HepG2 (cell line): ENCODE measurements at regions of chr1 and their contacts with region 1.

Region 1: DNA sequence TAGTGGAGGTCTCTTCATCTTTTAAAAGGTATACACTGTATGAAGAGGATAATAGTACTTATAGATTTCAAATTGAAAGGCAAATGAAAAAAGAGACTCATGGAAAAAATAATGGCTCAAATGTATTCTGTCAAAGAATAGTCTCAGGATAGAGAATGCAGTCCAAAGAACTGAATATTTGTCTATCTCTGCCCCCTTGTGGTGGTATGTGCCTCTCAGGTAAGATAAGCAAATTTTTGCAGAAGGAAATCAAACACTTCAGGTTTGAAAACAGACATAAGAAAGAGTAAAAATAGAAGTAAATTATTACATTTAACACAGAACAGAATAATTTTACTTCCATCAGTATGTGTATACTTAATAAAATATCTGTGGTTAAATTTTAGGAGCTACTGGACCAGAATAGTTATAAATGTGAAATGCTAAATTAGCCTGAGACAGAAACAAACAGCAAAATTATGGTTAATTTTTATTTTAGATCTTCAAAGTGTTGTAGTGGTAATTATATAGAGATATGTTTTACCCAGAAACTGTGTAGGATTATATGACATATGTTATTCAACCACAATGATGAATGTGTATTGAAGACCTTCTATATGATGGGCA is 164.4 kb upstream of the PALMD start:
- DNase-seq: peak; percentile 60
- ATAC-seq: peak; percentile 77
- H3K4me3 ChIP-seq: no peak overlapping the region
- H3K27ac ChIP-seq: no peak overlapping the region
- H3K4me1 ChIP-seq: no peaks in the 10 kb centered on the region
- H3K27me3 ChIP-seq: no peaks in the 10 kb centered on the region
- CTCF ChIP-seq: peak; percentile 70
- EP300 ChIP-seq: no peak
- POLR2A ChIP-seq: no peak
- RAD21 ChIP-seq: peak; percentile 53; the same call in 1 of the 2 replicates

Region 2: GRCh38 chr1:98794196-98794886 is 687.2 kb before region 1 on chr1:
- CTCF ChIA-PET with region 1: no interaction called
- POLR2A ChIA-PET with region 1: no interaction called
- in situ Hi-C with region 1: no loop called
- intact Hi-C with region 1: loop called (anchors 1 kb)
- DNase-seq: peak; percentile 42
- ATAC-seq: peak; percentile 94
- H3K4me3 ChIP-seq: no peak overlapping the region
- H3K27ac ChIP-seq: no peak overlapping the region
- H3K4me1 ChIP-seq: no peaks in the 10 kb centered on the region
- H3K27me3 ChIP-seq: no peaks in the 10 kb centered on the region
- CTCF ChIP-seq: peak; percentile 74
- EP300 ChIP-seq: no peak
- POLR2A ChIP-seq: no peak
- RAD21 ChIP-seq: 0 out of 2 replicates have a peak, but pooled peaks have one; percentile 18

Region 3: DNA sequence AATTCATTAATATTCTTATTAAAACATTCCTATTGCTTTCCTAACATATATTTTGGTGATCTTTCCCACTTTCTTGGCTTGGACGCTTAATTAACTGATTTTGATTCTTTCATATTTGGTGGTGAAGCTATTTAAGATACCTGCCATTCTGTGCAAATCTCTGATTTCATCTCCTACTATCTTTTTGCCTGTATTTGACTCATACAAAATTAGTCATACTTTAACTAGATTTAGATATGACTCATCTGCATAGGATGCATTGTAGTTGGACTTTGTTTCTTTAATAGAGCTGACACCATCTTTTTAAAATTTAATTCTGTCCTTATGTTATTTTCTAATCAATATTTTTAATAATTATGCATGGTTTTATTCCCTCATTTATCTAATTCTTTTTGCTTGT is 311.0 kb before region 1 on chr1:
- CTCF ChIA-PET with region 1: no interaction called
- POLR2A ChIA-PET with region 1: no interaction called
- in situ Hi-C with region 1: loop called (anchors 10 kb)
- intact Hi-C with region 1: no loop called
- DNase-seq: no peak
- ATAC-seq: no peak
- H3K4me3 ChIP-seq: no peak overlapping the region
- H3K27ac ChIP-seq: no peak overlapping the region
- H3K4me1 ChIP-seq: no peaks in the 10 kb centered on the region
- H3K27me3 ChIP-seq: no peaks in the 10 kb centered on the region
- CTCF ChIP-seq: no peak
- EP300 ChIP-seq: no peak
- POLR2A ChIP-seq: no peak
- RAD21 ChIP-seq: no peak

Region 4: DNA sequence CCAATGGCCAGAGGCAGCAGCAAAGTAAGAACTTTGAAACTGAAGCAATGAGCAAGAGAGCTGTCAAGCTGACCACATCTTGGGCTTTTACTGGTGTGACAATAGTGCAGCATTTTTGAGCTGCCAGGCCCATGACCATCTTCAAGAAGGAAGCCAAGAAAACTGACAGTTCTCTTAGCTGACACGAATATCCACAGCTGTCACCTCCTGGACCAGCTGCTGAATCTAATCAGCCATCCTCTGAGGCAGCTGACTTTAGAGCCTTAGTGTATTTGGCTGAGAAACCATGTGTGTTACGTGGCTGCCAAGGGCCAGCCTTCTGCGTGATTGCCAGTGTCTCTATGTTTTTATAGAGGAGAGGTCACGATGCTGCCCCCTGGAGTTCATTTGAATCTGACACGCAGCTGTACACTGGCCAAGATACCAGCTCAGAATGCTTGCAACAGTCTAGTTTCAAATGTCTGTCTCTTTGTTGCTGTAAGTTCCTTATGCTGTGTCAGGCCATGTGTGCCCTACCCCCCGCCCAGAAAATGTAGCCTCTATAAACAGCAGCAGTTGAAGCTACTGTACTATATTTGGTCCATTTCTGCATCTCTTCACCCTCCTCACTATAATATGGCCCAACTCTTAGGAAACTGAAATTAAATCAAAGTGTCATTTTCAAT is 204.2 kb after region 1 on chr1:
- CTCF ChIA-PET with region 1: interaction called, 3 read pairs
- POLR2A ChIA-PET with region 1: no interaction called
- in situ Hi-C with region 1: no loop called
- intact Hi-C with region 1: loop called (anchors 1 kb)
- DNase-seq: peak; percentile 53
- ATAC-seq: peak; percentile 97
- H3K4me3 ChIP-seq: no peak overlapping the region
- H3K27ac ChIP-seq: no peak overlapping the region
- H3K4me1 ChIP-seq: no peaks in the 10 kb centered on the region
- H3K27me3 ChIP-seq: no peaks in the 10 kb centered on the region
- CTCF ChIP-seq: peak; percentile 73
- EP300 ChIP-seq: no peak
- POLR2A ChIP-seq: no peak
- RAD21 ChIP-seq: peak; percentile 61

Region 5: GRCh38 chr1:99707535-99708142 is 226.1 kb after region 1 on chr1:
- CTCF ChIA-PET with region 1: interaction called, 7 read pairs
- POLR2A ChIA-PET with region 1: no interaction called
- in situ Hi-C with region 1: no loop called
- intact Hi-C with region 1: loop called (anchors 1 kb)
- DNase-seq: peak; percentile 55
- ATAC-seq: peak; percentile 74
- H3K4me3 ChIP-seq: no peak overlapping the region
- H3K27ac ChIP-seq: no peak overlapping the region
- H3K4me1 ChIP-seq: no peaks in the 10 kb centered on the region
- H3K27me3 ChIP-seq: no peaks in the 10 kb centered on the region
- CTCF ChIP-seq: peak; percentile 83
- EP300 ChIP-seq: no peak
- POLR2A ChIP-seq: no peak
- RAD21 ChIP-seq: peak; percentile 76